Pancreas (tissue), 10 donors: ENCODE measurements at regions of chr2 and their contacts with region 1.

Region 1: GRCh38 chr2:174341286-174341994 is 6.7 kb downstream of the SP9 start:
- DNase-seq: peak; percentile 77 to 97 (median 88)
- ATAC-seq: peak; percentile 89 to 96 (median 92)
- H3K4me3 ChIP-seq: no peak overlapping the region
- H3K27ac ChIP-seq: no peak overlapping the region
- H3K4me1 ChIP-seq: peaks cover 0 to 14% (median 11%) of the 10 kb centered on the region in 3 donors
- H3K27me3 ChIP-seq: peaks cover 16 to 67% (median 42%) of the 10 kb centered on the region in 4 donors
- CTCF ChIP-seq: peak; percentile 92 to 98 (median 96)

Region 2: DNA sequence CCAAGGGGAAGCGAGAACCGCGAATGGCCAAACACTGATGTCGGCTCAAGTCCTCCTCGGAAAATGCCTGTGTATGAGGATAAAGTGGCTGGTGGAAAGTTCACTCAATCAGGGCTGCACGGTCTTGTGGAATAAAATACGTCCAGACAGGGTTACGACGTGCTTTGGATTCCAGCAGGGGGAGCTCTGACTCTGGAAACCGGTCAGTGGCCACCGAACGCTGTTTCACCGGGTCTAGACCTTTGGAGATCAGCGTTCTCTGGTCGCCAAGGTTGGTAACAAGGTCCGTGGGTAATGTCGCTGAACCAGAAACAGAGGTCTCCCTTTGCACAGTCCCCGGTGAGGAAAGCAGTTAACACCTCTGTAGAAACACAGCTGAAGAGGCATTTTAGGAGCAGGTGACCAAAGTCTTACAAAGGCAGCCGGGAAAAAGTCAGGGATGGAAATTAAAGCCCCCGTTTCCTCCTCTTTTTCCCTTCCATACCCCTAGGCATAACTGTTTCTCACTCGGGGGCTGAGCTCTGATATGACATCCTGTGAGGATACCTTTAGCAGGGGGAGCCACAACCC is 939.0 kb before region 1 on chr2:
- intact Hi-C with region 1: loop called in 1 of 3 experiments (anchors 10 kb)
- DNase-seq: peak; percentile 64 to 84 (median 77)
- ATAC-seq: peak; percentile 98 to 99 (median 98)
- H3K4me3 ChIP-seq: no peak overlapping the region
- H3K27ac ChIP-seq: no peak overlapping the region
- H3K4me1 ChIP-seq: no peaks in the 10 kb centered on the region
- H3K27me3 ChIP-seq: peaks cover 0 to 24% (median 10%) of the 10 kb centered on the region in 4 donors
- CTCF ChIP-seq: peak; percentile 52 to 71 (median 64)

Region 3: GRCh38 chr2:174815526-174815925 is 474.1 kb after region 1 on chr2:
- intact Hi-C with region 1: no loop called
- DNase-seq: no peak
- ATAC-seq: no peak
- H3K4me3 ChIP-seq: no peak overlapping the region
- H3K27ac ChIP-seq: no peak overlapping the region
- H3K4me1 ChIP-seq: no peaks in the 10 kb centered on the region
- H3K27me3 ChIP-seq: no peaks in the 10 kb centered on the region
- CTCF ChIP-seq: no peak